ENCODE measurements at regions of chr11 and their contacts with region 1.

Region 1: GRCh38 chr11:59158206-59159068 is 13.5 kb upstream of the DTX4 start:
- DNase-seq: peak in 5 of 10 donors; percentile 51 to 87 (median 61)

Region 2: DNA sequence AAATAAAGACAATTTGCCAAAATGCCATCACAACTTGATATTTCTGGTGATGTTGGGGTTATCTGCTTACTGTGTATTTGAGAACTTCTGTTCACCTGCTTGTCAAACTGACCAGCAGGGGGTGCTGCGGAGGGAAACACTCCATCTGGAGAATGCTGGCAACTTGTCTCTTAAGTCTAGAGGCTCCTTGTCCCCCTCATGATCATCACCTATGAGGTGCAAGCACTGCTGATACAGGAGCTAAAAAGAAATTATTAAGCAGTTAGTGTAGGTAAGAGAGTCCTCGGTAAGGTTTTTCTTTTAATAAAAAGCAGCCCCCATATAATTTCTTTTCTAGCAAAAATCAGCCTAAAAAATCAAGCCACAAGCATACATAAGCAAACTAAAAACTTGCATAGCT is 105.0 kb before region 1 on chr11:
- intact Hi-C with region 1: loop called (anchors 2 kb)
- DNase-seq: peak in 9 of 10 donors; percentile 46 to 94 (median 75)

Region 3: GRCh38 chr11:59106363-59107336 is 51.8 kb before region 1 on chr11 and contains the start of gene FAM111B:
- intact Hi-C with region 1: loop called (anchors 5 kb)
- DNase-seq: peak; percentile 68 to 95 (median 81)

Region 4: GRCh38 chr11:59216641-59217564 is 58.5 kb after region 1 on chr11:
- intact Hi-C with region 1: no loop called
- DNase-seq: no peak

Region 5: DNA sequence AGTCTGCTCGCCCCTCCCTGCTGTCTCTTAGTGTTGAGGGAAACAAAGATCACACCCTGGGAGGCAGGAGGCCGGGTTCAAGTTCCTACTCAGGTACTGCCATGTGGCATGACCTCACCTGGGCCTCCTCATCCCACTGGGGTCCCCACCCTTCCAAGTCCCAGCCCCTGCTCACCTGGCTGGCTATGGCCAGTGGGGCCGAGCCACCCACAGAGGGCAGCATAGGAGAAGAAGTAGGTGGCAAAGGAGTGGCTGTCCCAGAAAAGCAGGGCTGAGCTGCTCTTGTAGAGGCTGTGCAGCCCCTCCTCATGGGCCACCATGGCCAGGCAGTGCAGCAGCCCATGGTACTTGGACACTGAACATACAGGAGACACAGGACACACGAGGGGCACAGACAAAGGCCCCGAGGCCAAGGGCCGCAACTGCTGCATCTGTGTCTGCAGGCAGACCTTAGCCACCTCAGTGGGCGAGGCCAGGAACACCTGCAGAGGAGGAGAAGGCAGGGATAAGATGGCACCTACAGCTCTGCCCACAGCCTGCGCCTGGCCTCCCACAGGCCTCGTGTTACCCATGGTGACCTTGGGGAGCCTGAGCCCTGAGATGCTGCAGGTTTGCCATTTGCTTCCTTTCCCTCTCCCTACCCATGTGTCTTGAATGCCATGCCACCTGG is 104.9 kb after region 1 on chr11:
- intact Hi-C with region 1: no loop called
- DNase-seq: no peak

Region 6: GRCh38 chr11:59615637-59616395 is 457.4 kb after region 1 on chr11 and contains the start of gene OSBP:
- intact Hi-C with region 1: no loop called
- DNase-seq: peak; percentile 98 to 100 (median 100)

Measured in posterior cingulate gyrus (tissue), 11 donors.